ENCODE measurements at regions of chr14 and their contacts with region 1.

Region 1: GRCh38 chr14:23258256-23258655 is 20.5 kb downstream of the RNF212B start:
- DNase-seq: no peak
- ATAC-seq: no peak
- H3K4me3 ChIP-seq: no peak overlapping the region
- H3K27ac ChIP-seq: no peak overlapping the region
- H3K4me1 ChIP-seq: no peaks in the 10 kb centered on the region
- H3K27me3 ChIP-seq: peaks cover 0 to 3% of the 10 kb centered on the region in 2 experiments; a peak in 1 of 5 replicates
- CTCF ChIP-seq: no peak
- EP300 ChIP-seq: no peak
- POLR2A ChIP-seq: no peak
- RAD21 ChIP-seq: no peak

Region 2: DNA sequence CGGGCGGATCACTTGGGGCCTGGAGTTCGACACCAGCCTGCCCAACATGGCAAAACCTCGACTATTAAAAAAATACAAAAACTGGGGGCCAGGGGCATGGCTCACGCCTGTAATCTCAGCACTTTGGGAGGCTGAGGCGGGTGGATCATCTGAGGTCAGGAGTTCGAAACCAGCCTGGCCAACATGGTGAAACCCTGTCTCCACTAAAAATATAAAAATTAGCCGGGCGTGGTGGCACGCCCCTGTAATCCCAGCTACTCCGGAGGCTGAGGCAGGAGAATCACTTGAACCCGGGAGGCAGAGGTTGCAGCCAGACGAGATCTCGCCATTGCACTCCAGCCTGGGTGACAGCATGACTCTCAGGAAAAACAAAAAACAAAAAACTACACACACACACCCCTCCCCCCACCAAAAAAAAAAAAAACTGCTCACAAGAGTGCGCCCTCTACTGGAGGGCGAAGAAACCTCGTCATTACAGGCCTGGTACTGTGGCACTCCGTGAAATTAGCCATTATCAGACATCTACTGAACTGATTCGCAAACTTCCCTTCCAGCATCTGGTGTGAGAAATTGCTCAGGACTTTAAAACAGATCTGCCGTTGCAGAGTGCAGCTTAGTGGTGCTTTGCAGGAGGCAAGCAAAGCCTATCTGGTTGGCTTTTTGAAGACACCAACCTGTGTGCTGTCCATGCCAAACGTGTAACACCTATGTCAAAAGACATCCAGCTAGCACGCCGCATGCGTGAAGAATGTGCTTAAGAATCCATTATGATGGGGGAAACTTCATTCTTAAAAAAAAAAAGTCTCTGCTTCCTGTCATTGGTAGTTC is 36.7 kb after region 1 on chr14:
- CTCF ChIA-PET with region 1: no interaction called
- POLR2A ChIA-PET with region 1: no interaction called
- in situ Hi-C with region 1: loop called (anchors 5 kb)
- intact Hi-C with region 1: no loop called
- DNase-seq: peak; percentile 77
- ATAC-seq: peak; percentile 75
- H3K4me3 ChIP-seq: no peak overlapping the region
- H3K27ac ChIP-seq: no peak overlapping the region
- H3K4me1 ChIP-seq: peaks cover 24% of the 10 kb centered on the region
- H3K27me3 ChIP-seq: no peaks in the 10 kb centered on the region
- CTCF ChIP-seq: peak; percentile 94
- EP300 ChIP-seq: peak; percentile 20 to 38; a peak in 1 of 4 replicates
- POLR2A ChIP-seq: peak in 1 of 2 experiments; percentile 34; a peak in 1 of 4 replicates
- RAD21 ChIP-seq: 0 out of 2 replicates have a peak, but pooled peaks have one; percentile 33

Region 3: DNA sequence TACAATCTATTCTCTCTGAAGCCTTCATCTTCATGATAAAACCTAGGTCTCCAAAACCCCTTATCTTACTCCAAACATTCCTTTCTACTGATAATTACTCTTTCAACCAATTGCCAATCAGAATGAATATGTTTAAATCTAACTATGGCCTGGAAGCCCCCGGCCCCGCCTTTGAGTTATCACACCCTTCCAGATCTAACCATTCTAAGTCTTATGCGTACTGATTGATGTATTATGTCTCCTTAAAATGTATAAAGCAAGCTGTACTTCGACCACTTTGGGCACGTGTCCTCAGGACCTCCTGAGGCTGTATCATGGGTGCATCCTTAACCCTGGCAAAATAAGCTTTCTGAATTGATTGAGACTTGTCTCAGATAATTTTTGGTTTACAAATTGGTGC is 77.4 kb after region 1 on chr14:
- CTCF ChIA-PET with region 1: no interaction called
- POLR2A ChIA-PET with region 1: no interaction called
- in situ Hi-C with region 1: no loop called
- intact Hi-C with region 1: no loop called
- DNase-seq: no peak
- ATAC-seq: no peak
- H3K4me3 ChIP-seq: no peak overlapping the region
- H3K27ac ChIP-seq: no peak overlapping the region
- H3K4me1 ChIP-seq: no peaks in the 10 kb centered on the region
- H3K27me3 ChIP-seq: peaks cover 0 to 21% of the 10 kb centered on the region in 2 experiments; a peak in 1 of 5 replicates
- CTCF ChIP-seq: no peak
- EP300 ChIP-seq: no peak
- POLR2A ChIP-seq: no peak
- RAD21 ChIP-seq: no peak

Region 4: DNA sequence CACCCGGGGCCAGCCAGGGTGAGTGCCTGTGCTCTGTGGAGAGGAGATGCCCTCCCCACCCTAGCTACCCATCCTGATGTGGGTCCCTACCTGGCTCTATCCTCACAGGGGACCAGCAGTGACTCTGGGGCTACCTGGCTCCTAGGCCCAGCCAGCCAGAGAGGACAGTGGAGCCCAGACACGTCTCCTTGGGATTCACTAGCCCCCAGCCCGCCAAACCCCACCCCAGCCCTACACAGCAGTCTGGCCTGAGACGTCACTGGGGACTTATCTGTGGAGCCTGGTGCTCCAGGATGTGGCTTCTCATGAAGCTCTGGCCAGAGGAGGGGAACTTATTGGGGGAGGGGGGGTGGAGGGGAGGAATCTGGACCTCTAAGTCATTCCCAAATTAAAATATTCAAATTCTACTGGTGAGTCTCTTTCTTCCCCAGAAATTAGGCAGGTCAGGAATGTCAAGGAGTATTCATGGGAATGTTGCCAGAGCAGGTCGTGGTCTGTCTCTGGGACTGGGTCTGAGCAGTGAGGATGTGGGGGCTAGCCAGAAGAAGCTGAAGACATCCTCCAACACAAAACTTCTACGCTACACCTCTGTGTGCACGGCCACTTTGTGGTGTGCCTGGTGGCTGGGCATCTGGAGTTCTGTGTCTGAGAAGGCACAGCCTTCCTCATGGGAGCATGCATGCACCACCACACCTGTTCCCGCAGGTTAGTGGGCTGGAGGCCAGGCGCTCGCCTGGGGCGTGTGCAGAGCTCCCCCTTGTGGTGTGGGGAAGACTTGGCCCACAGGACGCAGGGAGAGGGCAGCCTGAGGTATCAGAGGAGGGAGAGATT is 121.3 kb after region 1 on chr14:
- CTCF ChIA-PET with region 1: no interaction called
- POLR2A ChIA-PET with region 1: no interaction called
- in situ Hi-C with region 1: loop called (anchors 5 kb)
- intact Hi-C with region 1: no loop called
- DNase-seq: peak; percentile 66
- ATAC-seq: peak; percentile 88
- H3K4me3 ChIP-seq: no peak overlapping the region
- H3K27ac ChIP-seq: no peak overlapping the region
- H3K4me1 ChIP-seq: no peaks in the 10 kb centered on the region
- H3K27me3 ChIP-seq: peaks cover 26 to 90% of the 10 kb centered on the region in 2 experiments
- CTCF ChIP-seq: peak; percentile 100
- EP300 ChIP-seq: no peak
- POLR2A ChIP-seq: no peak
- RAD21 ChIP-seq: peak; percentile 98